HEK293 (cell line): ENCODE measurements at regions of chr17 and their contacts with region 1.

Region 1: GRCh38 chr17:45021607-45022287 is 29.7 kb downstream of the DCAKD start:
- H3K4me3 ChIP-seq: peak overlapping the region; percentile 3; the same call in 1 of the 2 replicates
- H3K27ac ChIP-seq: no peak overlapping the region; the same call in 1 of the 2 replicates
- H3K4me1 ChIP-seq: peaks cover 3% of the 10 kb centered on the region; the same call in 1 of the 2 replicates
- CTCF ChIP-seq: 0 out of 2 replicates have a peak, but pooled peaks have one; percentile 28

Region 2: GRCh38 chr17:44850612-44851011 is 171.1 kb before region 1 on chr17:
- CTCF ChIA-PET with region 1: no interaction called
- POLR2A ChIA-PET with region 1: no interaction called
- H3K4me3 ChIP-seq: no peak overlapping the region
- H3K27ac ChIP-seq: no peak overlapping the region
- H3K4me1 ChIP-seq: no peaks in the 10 kb centered on the region
- CTCF ChIP-seq: no peak

Region 3: GRCh38 chr17:44899069-44899782 is 122.5 kb before region 1 on chr17 and contains the start of gene EFTUD2:
- CTCF ChIA-PET with region 1: interaction called, 10 read pairs
- POLR2A ChIA-PET with region 1: interaction called, 3 read pairs
- H3K4me3 ChIP-seq: peak within 1 kb of the TSS; percentile 74
- H3K27ac ChIP-seq: peak within 1 kb of the TSS; percentile 93
- H3K4me1 ChIP-seq: peaks cover 24% of the 10 kb centered on the region
- CTCF ChIP-seq: no peak; the same call in 1 of the 2 replicates

Region 4: DNA sequence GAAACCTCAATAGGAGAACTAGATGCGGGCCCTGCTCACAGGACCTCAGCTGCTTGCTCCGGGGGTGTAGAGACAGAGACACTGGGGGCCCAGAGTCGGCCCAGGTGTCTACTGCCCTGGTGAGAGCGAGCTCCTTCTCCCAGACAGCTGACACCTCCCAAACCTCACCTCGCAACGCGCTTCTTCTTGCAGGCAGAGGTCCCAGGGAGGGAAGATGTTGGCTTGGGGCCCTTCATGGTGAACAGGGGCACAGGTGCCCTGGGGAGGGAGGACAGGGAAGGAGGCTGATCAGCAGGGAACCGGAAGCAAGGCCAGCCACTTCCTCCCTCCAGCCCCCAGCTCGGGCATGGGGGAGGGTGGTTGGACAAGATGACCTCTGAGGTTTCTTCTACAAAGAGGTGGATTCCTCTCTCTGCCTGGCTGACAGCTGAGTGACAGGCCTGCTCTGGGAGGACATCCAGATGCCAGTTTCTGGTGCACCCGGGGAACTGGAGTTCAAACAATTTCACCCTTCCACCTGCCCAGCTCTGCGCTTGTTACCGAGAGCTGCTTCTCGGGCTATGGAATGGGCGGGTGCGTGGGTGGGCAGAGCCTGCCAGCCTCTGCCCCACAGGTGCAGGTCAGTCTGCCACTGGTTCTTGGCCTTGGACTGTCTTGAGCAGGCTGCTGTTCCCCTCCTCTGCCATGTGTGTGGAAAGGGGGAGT is 94.8 kb before region 1 on chr17:
- CTCF ChIA-PET with region 1: interaction called, 296 read pairs
- POLR2A ChIA-PET with region 1: interaction called, 4 read pairs
- H3K4me3 ChIP-seq: no peak overlapping the region
- H3K27ac ChIP-seq: no peak overlapping the region
- H3K4me1 ChIP-seq: no peaks in the 10 kb centered on the region; the same call in 1 of the 2 replicates
- CTCF ChIP-seq: no peak

Region 5: DNA sequence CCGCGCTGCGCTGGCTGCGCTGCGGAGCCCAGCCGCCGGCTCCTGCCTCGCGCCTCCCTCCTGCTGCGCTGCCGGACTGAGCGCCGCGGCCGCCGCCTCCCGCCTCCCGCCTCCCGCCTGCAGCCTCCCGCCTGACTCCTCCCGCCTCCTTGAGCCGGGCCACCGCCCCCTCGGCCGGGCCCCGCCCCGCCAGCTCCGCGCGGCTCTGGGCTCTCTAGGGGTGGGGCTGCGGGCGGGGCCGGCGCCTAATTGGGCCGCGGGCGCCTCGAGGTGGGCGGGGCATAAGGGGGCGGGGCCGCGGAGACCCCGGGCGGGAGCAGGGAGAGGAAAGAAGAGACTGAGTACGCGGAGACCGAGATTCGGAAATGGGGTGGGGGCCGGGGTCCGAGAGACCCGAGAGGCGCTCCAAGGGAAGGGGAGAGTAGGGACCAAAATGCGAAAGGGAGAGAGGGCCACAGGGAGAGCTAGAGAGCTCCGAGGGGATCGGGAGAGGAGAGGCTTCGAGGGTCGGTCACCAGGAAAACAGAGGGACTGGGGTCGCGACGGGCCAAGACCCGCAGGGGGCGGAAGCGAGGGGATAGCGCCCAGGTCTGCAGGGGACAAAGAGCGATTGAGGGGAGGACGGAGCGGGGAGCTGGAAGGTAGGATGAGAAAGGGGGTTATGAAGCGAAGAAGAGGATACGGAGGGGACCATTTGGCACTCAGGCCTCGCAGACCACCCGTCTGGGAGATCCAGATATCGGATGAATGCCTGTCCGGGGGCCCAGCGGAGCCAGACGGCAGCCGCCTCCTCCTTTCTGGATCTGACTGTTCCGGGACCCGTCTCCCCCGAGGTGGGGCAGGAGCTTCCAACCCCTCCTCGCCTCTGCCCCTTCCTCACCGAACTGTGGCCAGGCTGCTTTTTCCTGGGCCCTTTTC is 53.3 kb before region 1 on chr17 and contains the start of gene C1QL1:
- CTCF ChIA-PET with region 1: interaction called, 17 read pairs
- POLR2A ChIA-PET with region 1: interaction called, 3 read pairs
- H3K4me3 ChIP-seq: peak within 1 kb of the TSS; percentile 37
- H3K27ac ChIP-seq: peak within 1 kb of the TSS; percentile 16; the same call in 1 of the 2 replicates
- H3K4me1 ChIP-seq: peaks cover 3% of the 10 kb centered on the region
- CTCF ChIP-seq: peak; percentile 94

Region 6: DNA sequence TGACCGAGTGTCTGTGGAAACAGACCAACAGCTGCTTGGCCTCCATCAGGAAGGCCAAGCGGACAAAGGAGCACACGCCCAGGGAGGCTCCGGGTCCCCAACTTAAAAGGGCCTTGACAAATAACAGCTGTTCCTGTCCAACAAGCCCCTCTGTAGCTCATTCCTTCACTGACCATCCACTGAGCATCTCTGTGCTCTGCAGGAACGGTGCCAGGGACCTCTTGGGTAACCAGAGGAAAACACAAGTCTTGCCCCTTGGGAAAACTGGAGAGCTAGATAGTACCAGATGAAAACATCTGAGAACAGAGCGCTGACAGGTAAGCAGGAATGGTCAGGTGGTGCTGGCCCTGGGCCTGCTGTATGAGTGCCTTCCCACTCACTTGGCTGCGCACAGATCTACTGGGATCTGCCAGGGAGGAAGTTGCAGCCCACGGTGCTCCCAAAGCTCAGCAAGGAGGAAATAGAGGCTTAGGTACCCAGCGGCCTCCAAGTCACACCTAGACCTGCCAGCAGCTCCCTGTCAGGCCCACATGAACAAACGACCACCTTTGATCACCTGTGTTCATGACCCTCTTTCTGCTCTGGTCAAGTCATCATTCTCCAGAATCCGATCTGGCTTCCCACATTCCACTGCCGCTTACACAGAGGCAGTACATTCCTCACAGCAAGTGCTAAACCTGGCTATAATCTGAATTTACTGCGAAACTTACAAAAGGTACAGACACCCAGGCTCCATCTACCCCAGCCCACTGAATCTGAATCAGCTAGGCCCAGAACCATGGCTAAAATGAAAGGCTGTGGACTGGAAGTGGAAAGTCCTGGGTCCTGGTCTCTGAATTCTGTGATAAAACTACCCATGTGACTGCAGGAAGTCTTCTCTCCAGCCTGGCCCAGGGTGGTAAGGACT is 17.2 kb after region 1 on chr17:
- CTCF ChIA-PET with region 1: interaction called, 35 read pairs
- POLR2A ChIA-PET with region 1: interaction called, 3 read pairs
- H3K4me3 ChIP-seq: no peak overlapping the region
- H3K27ac ChIP-seq: peak overlapping the region; percentile 34; the same call in 1 of the 2 replicates
- H3K4me1 ChIP-seq: peaks cover 8% of the 10 kb centered on the region; the same call in 1 of the 2 replicates
- CTCF ChIP-seq: no peak

Region 7: DNA sequence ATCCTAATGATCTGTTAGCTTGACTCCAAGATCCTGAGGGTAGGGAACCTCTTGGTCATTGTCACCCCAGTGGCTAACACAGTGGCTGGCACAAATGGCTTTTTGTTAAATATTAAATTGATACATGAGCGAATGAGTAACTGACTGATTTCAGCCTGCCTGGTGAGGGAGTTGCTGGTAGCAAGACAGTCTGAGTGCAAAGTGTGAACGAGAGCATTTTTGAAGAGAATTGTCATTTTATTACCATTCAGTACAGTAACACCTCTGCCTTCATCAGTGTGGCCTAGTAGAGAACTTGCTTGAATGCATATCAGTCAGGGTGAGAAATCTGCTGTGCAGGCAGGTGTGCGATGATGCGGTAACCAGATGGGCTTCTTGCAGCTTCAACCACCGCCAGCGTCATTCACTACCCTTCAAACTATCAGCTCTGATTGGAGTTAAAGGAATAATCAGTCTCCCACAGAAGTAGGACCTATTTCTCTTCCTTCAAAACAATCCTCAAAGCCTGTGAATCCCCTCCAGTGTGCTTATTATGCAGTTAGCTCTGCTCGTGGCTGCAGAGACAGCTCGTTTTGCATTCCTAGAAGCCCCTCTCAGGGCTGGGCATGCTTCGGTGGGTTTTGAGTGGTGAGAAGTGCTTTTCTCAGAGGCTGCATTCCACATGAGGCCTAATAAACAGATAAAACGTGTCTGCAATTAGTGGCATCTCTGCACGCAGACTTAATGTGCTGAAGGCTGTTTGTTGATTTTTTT is 168.9 kb after region 1 on chr17:
- CTCF ChIA-PET with region 1: no interaction called
- POLR2A ChIA-PET with region 1: no interaction called
- H3K4me3 ChIP-seq: no peak overlapping the region
- H3K27ac ChIP-seq: no peak overlapping the region
- H3K4me1 ChIP-seq: no peaks in the 10 kb centered on the region
- CTCF ChIP-seq: no peak